ENCODE measurements at regions of chr3 and their contacts with region 1.

Region 1: DNA sequence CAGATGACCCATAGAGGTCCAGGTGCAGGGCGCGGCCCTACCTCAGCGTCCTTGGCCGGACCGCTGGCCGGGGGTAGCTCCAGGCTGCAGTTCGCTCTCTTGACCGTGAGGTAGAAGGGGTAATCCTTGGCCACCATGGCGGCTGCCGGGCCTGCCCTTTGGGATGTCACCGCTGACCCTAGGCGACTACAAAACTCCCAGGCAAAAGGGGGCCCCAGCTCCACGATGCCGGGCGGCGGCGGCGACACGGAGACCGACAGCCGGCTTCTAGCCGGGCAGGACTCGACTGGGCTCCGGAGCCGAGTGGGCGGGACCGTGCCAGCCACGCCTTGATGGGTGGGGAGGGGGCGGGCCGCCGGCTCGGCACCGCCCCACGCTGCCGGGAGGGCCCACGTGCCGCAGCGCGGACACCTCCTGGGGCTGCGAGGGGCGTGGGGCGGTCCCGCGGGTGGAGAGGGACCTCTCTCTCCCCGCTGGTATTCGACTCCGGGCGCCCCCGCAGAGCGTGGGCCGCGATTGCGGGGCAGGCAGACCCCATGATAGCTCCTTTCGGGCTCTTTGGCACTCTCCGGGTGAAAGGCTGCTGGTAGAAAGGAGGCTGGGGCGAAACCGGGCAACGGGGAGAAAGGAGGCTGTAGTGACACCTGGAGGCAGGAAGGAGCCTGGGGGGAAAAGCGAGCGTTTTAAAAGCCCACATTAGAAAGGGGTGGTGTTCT is at the start of gene ARHGEF3:
- DNase-seq: peak; percentile 88 to 95
- H3K4me3 ChIP-seq: peak within 1 kb of the TSS; percentile 61 to 84 (median 80)
- H3K27ac ChIP-seq: peak within 1 kb of the TSS; percentile 78 to 84 (median 82)
- H3K4me1 ChIP-seq: peaks cover 44 to 64% (median 50%) of the 10 kb centered on the region in 4 donors
- H3K27me3 ChIP-seq: no peaks in the 10 kb centered on the region
- CTCF ChIP-seq: peak in 4 of 7 experiments; percentile 28 to 59 (median 40)
- EP300 ChIP-seq: no peak
- POLR2A ChIP-seq: peak in 1 of 4 donors; percentile 69
- total RNA-seq, gene ARHGEF3: 6.2 to 23.8 (median 17.5) TPM

Region 2: GRCh38 chr3:56702490-56703315 is 99.1 kb before region 1 on chr3:
- intact Hi-C with region 1: loop called (anchors 5 kb)
- DNase-seq: peak; percentile 45 to 91
- H3K4me3 ChIP-seq: no peak overlapping the region
- H3K27ac ChIP-seq: no peak overlapping the region
- H3K4me1 ChIP-seq: peaks cover 0 to 8% (median 2%) of the 10 kb centered on the region in 4 donors
- H3K27me3 ChIP-seq: no peaks in the 10 kb centered on the region
- CTCF ChIP-seq: peak in 5 of 7 experiments; percentile 64 to 86 (median 82)
- EP300 ChIP-seq: no peak
- POLR2A ChIP-seq: no peak

Measured in stomach (tissue), 19 donors.